Activated B cell treated with CpG ODN at 0.5 μM for 24 hours (primary cell): ENCODE measurements at regions of chr5 and their contacts with region 1.

Region 1: DNA sequence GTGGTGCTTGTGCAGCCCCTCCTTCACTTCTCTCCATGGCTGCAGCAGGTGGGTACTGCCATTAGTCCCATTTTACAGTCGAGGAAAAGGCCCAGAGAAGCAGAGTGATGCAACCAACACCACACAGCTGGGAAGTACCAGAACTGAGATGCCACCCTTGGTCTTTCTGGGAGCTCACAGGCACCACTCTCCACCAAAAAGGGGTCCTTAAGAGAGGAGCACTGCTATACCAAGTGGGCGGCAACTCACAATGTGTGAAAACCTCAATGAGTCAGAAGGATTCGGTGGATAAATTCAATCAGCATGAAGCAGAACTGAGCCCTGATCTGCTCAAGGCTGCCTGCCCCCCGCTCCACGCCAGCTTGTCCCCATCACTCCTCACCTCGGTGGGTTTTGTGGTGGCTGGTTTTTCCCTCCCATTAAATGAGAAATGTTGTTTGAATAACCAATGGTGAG is 213.7 kb downstream of the FSTL4 start:
- DNase-seq: no peak
- ATAC-seq: peak; percentile 88
- H3K4me3 Mint-ChIP-seq: peak overlapping the region; percentile 59
- H3K27ac Mint-ChIP-seq: peak overlapping the region; percentile 94
- H3K4me1 Mint-ChIP-seq: peaks cover 48% of the 10 kb centered on the region
- H3K27me3 Mint-ChIP-seq: no peaks in the 10 kb centered on the region
- CTCF ChIP-seq: no peak

Region 2: GRCh38 chr5:133347039-133347438 is 51.6 kb before region 1 on chr5:
- CTCF ChIA-PET with region 1: no interaction called
- POLR2A ChIA-PET with region 1: no interaction called
- intact Hi-C with region 1: no loop called
- DNase-seq: no peak
- ATAC-seq: peak; percentile 71
- H3K4me3 Mint-ChIP-seq: no peak overlapping the region
- H3K27ac Mint-ChIP-seq: no peak overlapping the region
- H3K4me1 Mint-ChIP-seq: no peaks in the 10 kb centered on the region
- H3K27me3 Mint-ChIP-seq: peaks cover 16% of the 10 kb centered on the region
- CTCF ChIP-seq: no peak

Region 3: GRCh38 chr5:134541736-134542376 is 1143.2 kb after region 1 on chr5:
- CTCF ChIA-PET with region 1: no interaction called
- POLR2A ChIA-PET with region 1: no interaction called
- intact Hi-C with region 1: loop called (anchors 5 kb)
- DNase-seq: no peak
- ATAC-seq: no peak
- H3K4me3 Mint-ChIP-seq: peak overlapping the region; percentile 78
- H3K27ac Mint-ChIP-seq: peak overlapping the region; percentile 96
- H3K4me1 Mint-ChIP-seq: peaks cover 86% of the 10 kb centered on the region
- H3K27me3 Mint-ChIP-seq: no peaks in the 10 kb centered on the region
- CTCF ChIP-seq: no peak